ENCODE measurements at regions of chr17 and their contacts with region 1.

Region 1: DNA sequence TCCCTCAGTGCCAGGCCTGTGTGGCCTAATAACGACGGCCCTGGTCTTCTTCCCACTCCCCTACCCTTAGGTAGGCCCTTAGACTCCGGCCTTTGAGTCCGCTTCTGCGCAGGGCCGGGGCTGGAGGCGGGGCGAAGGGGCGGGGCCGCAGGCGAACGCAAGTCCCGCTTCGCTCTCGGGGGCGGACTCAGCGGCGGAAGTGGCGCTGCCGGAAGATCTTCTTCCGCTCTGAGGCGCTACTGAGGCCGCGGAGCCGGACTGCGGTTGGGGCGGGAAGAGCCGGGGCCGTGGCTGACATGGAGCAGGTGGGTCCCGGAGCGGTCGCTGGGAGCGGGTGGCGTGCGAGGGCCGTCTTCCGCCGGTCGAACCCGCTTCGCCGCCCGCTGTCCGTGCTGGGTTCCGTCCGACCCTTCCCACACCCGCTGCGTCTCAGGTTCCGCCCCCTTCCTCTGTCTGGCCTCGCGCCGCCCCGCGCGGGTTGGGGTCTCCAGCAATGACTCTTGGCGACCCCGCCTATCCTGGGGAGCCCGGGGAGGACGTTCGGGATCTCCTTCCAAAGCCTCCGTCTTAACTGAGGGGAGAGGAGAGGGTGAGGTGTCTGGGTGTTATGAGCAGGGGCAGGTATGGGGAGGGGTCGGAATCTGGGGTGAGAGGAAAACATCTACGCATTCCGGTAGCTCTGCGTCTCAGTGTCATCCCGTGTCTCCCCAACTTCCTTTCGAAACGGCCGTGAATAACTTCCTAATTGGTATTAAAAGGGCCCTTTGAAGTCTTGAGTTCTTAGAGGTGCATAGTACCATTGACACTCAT is at the start of gene STARD3:
- DNase-seq: peak; percentile 80 to 92 (median 86)
- ATAC-seq: peak; percentile 95
- H3K4me3 ChIP-seq: peak within 1 kb of the TSS; percentile 86
- H3K4me3 Mint-ChIP-seq: peak within 1 kb of the TSS; percentile 89 to 98 (median 95)
- H3K27ac ChIP-seq: peak within 1 kb of the TSS; percentile 92
- H3K27ac Mint-ChIP-seq: peak within 1 kb of the TSS; percentile 76 to 97 (median 92)
- H3K4me1 ChIP-seq: peaks cover 43 to 49% of the 10 kb centered on the region in 2 donors
- H3K4me1 Mint-ChIP-seq: peaks cover 40 to 71% (median 60%) of the 10 kb centered on the region in 7 donors
- H3K27me3 ChIP-seq: no peaks in the 10 kb centered on the region
- H3K27me3 Mint-ChIP-seq: peaks cover 0 to under 1% (median 0%) of the 10 kb centered on the region in 5 donors
- total RNA-seq, gene STARD3: 69.8 to 143 (median 99.3) TPM

Region 2: DNA sequence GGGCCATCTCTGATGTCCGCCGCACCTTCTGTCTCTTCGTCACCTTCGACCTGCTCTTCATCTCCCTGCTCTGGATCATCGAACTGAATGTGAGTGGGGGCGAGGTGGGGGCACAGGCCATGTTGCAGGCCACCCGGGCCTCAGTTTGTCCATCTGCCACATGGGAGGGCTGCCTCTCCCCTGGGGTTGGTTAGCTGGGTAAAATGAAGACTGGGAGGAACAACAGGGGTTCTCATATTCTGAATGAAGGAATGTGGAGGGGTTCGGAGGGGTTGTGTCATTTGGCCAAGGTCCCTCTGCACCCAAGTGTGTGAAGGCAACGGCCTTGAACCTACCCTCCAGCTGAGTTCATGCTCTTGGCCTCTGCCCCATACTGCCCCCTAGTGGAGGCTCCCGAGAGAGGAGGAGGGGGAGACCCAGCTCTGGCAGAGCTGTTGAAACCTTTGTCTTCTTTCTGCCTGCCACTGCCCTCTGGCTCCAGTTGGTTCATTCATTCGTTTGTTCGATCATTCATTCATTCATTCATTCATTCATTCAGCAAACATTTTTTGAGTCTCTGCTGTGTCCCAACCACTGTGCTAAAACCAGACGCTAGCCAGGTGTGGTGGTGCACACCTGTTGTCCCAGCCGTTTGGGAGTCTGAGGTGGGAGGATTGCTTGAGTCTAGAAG is 16.7 kb after region 1 on chr17:
- CTCF ChIA-PET with region 1: interaction called, 15 read pairs
- POLR2A ChIA-PET with region 1: interaction called, 14 read pairs
- intact Hi-C with region 1: loop called in 1 of 2 experiments (anchors 2 kb)
- DNase-seq: peak; percentile 58 to 83 (median 71)
- ATAC-seq: peak; percentile 91
- H3K4me3 ChIP-seq: no peak overlapping the region
- H3K4me3 Mint-ChIP-seq: no peak overlapping the region
- H3K27ac ChIP-seq: peak overlapping the region; percentile 36
- H3K27ac Mint-ChIP-seq: peak overlapping the region in 5 of 9 donors; percentile 21 to 74 (median 51)
- H3K4me1 ChIP-seq: peaks cover 4 to 23% of the 10 kb centered on the region in 2 donors
- H3K4me1 Mint-ChIP-seq: peaks cover 24 to 74% (median 63%) of the 10 kb centered on the region in 7 donors
- H3K27me3 ChIP-seq: no peaks in the 10 kb centered on the region
- H3K27me3 Mint-ChIP-seq: no peaks in the 10 kb centered on the region

Region 3: GRCh38 chr17:39659279-39660010 is 22.3 kb after region 1 on chr17:
- CTCF ChIA-PET with region 1: interaction called, 15 read pairs
- POLR2A ChIA-PET with region 1: interaction called, 14 read pairs
- intact Hi-C with region 1: loop called in 1 of 2 experiments (anchors 2 kb)
- DNase-seq: peak in 3 of 9 donors; percentile 27 to 38 (median 29)
- ATAC-seq: peak; percentile 29
- H3K4me3 ChIP-seq: no peak overlapping the region
- H3K4me3 Mint-ChIP-seq: peak overlapping the region in 9 of 10 donors; percentile 38 to 81 (median 60)
- H3K27ac ChIP-seq: peak overlapping the region; percentile 55
- H3K27ac Mint-ChIP-seq: peak overlapping the region; percentile 71 to 93 (median 90)
- H3K4me1 ChIP-seq: peaks cover 0 to 30% of the 10 kb centered on the region in 2 donors
- H3K4me1 Mint-ChIP-seq: peaks cover 19 to 57% (median 44%) of the 10 kb centered on the region in 7 donors
- H3K27me3 ChIP-seq: no peaks in the 10 kb centered on the region
- H3K27me3 Mint-ChIP-seq: no peaks in the 10 kb centered on the region

Region 4: DNA sequence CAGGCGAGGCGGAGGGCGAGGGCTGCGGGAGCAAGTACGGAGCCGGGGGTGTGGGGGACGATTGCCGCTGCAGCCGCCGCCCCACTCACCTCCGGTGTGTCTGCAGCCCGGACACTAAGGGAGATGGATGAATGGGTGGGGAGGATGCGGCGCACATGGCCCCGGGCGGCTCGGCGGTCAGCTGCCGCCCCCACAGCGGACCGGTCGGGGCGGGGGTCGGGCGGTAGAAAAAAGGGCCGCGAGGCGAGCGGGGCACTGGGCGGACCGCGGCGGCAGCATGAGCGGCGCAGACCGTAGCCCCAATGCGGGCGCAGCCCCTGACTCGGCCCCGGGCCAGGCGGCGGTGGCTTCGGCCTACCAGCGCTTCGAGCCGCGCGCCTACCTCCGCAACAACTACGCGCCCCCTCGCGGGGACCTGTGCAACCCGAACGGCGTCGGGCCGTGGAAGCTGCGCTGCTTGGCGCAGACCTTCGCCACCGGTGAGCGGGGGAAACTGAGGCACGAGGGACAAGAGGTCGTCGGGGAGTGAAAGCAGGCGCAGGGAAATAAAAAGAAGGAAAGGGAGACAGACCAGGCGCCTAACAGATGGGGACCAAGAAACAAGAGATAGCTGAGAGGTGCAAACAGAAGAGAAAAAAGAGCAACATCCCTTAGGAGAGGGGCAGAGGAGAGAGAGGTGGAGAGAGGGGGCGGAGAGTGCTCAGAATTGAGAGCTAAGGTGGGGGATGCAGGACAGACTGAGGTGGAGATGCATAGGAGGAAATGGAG is 31.3 kb after region 1 on chr17 and contains the start of gene PNMT:
- CTCF ChIA-PET with region 1: interaction called, 8 read pairs
- POLR2A ChIA-PET with region 1: interaction called, 5 read pairs
- intact Hi-C with region 1: loop called in 1 of 2 experiments (anchors 1 kb)
- DNase-seq: peak; percentile 44 to 76 (median 63)
- ATAC-seq: peak; percentile 83
- H3K4me3 ChIP-seq: peak within 1 kb of the TSS; percentile 50
- H3K4me3 Mint-ChIP-seq: peak within 1 kb of the TSS; percentile 50 to 83 (median 68)
- H3K27ac ChIP-seq: peak within 1 kb of the TSS; percentile 51
- H3K27ac Mint-ChIP-seq: peak within 1 kb of the TSS in 1 of 9 donors; percentile 26
- H3K4me1 ChIP-seq: peaks cover 4 to 13% of the 10 kb centered on the region in 2 donors
- H3K4me1 Mint-ChIP-seq: peaks cover 5 to 23% (median 14%) of the 10 kb centered on the region in 7 donors
- H3K27me3 ChIP-seq: no peaks in the 10 kb centered on the region
- H3K27me3 Mint-ChIP-seq: peaks cover 0 to 48% (median 5%) of the 10 kb centered on the region in 5 donors
- total RNA-seq, gene PNMT: 0.42 to 0.89 (median 0.50) TPM in 4 of 5 experiments, not detected in the other

Region 5: DNA sequence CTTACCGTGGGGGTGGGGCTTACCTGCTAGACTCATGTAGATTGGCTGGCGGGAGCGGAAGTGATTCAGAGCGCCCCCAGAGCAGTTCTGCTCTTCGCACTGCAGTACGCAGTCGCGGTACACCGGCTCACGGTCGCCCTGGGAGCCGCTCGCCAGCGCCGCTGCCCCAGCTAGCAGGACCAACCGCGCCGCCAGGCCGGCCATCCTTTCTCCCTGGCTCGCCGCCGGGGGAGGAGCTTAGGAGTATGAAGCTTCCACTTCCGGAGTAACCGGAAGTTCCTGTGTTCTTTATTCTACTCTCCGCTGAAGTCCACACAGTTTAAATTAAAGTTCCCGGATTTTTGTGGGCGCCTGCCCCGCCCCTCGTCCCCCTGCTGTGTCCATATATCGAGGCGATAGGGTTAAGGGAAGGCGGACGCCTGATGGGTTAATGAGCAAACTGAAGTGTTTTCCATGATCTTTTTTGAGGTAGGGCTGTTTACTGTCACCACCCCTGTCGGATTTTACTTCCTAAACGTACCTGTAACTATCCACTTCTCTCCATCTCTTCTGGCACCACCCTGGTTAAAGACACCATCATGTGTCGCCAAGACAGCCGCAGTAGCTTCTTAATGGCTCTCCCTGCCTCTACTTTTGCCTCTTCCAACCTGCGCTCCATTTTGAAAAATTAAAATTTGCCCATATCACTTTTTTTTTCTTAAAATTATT is 50.8 kb after region 1 on chr17 and contains the start of gene PGAP3:
- CTCF ChIA-PET with region 1: interaction called, 3 read pairs
- POLR2A ChIA-PET with region 1: interaction called, 8 read pairs
- intact Hi-C with region 1: loop called (anchors 1 to 5 kb)
- DNase-seq: peak; percentile 71 to 86 (median 83)
- ATAC-seq: peak; percentile 95
- H3K4me3 ChIP-seq: peak within 1 kb of the TSS; percentile 93
- H3K4me3 Mint-ChIP-seq: peak within 1 kb of the TSS; percentile 87 to 99 (median 98)
- H3K27ac ChIP-seq: peak within 1 kb of the TSS; percentile 77
- H3K27ac Mint-ChIP-seq: peak within 1 kb of the TSS; percentile 93 to 99 (median 98)
- H3K4me1 ChIP-seq: peaks cover 8 to 18% of the 10 kb centered on the region in 2 donors
- H3K4me1 Mint-ChIP-seq: peaks cover 19 to 32% (median 30%) of the 10 kb centered on the region in 7 donors
- H3K27me3 ChIP-seq: no peaks in the 10 kb centered on the region
- H3K27me3 Mint-ChIP-seq: no peaks in the 10 kb centered on the region
- total RNA-seq, gene PGAP3: 26.3 to 39.9 (median 35.1) TPM